ENCODE measurements at regions of chr7 and their contacts with region 1.

Region 1: DNA sequence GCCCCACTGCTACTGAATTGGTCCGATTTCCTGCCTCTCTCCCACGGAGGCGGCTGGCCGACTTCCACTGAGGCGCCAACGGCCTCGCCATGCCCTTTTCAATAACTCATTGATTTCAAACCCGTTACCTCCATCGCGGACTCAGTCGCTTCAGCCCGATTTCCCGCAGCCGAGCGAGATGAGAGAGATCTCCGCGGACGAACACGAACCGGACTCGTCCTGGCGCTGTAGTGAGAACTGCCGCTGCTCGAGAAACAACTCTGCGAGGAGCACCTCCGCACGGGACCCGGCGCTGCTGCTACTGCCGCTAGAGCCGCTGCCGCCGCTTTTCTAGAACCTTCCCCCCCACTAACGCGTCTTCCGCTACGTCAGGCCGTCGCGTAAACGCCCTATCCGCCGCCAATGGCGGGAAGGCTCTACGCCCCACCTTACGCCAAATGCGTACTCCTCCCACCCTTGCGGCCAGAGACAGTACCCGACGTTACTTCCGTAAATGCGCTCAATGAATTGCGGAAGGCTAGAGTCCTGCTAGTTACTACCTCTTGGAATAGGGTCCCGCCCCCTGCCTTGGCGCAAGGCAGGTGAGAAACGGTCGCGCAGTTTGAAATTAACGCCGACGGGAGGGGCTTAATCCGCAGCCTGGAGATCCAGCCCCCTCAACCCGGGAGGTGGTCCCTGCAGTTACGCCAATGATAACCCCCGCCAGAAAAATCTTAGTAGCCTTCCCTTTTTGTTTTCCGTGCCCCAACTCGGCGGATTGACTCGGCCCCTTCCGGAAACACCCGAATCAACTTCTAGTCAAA is at the start of gene HNRNPA2B1:
- DNase-seq: peak; percentile 97 to 98
- H3K4me3 ChIP-seq: peak within 1 kb of the TSS; percentile 98 to 99 (median 98)
- H3K27ac ChIP-seq: peak within 1 kb of the TSS; percentile 99
- H3K4me1 ChIP-seq: peaks cover 0 to 9% (median 3%) of the 10 kb centered on the region in 4 experiments; a peak in 3 of 7 replicates
- H3K27me3 ChIP-seq: no peaks in the 10 kb centered on the region
- CTCF ChIP-seq: no peak
- EP300 ChIP-seq: no peak
- POLR2A ChIP-seq: peak; percentile 98 to 99
- RAD21 ChIP-seq: no peak
- total RNA-seq, gene HNRNPA2B1: 1,232 and 1,255 TPM in 2 replicates

Region 2: GRCh38 chr7:26078437-26079336 is 122.0 kb before region 1 on chr7:
- CTCF ChIA-PET with region 1: interaction called, 4 read pairs
- POLR2A ChIA-PET with region 1: interaction called, 230 read pairs
- DNase-seq: peak; percentile 36 to 87
- H3K4me3 ChIP-seq: peak overlapping the region in 1 of 4 experiments; percentile 3; a peak in 1 of 8 replicates
- H3K27ac ChIP-seq: no peak overlapping the region
- H3K4me1 ChIP-seq: peaks cover 1 to 7% (median 3%) of the 10 kb centered on the region in 4 experiments; a peak in 3 of 7 replicates
- H3K27me3 ChIP-seq: no peaks in the 10 kb centered on the region; a peak in 2 of 7 replicates
- CTCF ChIP-seq: peak; percentile 49 to 64 (median 56)
- EP300 ChIP-seq: no peak
- POLR2A ChIP-seq: no peak
- RAD21 ChIP-seq: peak; percentile 46 to 66; a peak in 3 of 4 replicates

Region 3: DNA sequence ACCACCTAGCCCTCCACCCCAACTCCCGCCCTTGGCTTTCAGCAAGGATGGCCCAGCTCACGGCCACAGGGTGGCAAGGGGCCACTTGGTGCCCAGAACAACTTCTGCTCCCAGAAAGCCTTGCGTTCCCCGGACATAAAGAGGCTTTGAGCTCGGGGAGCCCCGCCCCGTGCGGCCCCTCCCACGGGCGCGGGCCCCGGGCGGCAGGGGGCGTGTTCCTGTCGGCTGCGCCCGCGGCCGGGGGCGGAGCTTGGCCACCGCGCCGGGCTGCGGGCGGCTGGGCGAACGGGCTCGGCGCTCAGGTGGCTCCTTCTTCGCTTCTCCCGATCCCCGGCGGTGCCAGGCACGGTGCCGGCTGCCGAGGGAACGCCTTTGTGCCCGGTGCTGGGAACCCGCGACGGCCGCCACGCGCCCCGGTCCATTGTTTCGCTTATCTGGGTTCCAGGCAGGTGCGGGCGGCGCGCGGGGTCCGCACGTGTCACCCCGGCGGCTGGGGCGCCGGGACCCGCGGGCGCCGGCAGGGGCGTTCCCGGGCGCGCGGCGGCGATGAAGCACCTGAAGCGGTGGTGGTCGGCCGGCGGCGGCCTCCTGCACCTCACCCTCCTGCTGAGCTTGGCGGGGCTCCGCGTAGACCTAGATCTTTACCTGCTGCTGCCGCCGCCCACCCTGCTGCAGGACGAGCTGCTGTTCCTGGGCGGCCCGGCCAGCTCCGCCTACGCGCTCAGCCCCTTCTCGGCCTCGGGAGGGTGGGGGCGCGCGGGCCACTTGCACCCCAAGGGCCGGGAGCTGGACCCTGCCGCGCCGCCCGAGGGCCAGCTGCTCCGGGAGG is 48.5 kb before region 1 on chr7 and contains the start of gene NFE2L3:
- CTCF ChIA-PET with region 1: interaction called, 4 read pairs
- POLR2A ChIA-PET with region 1: interaction called, 40 read pairs
- DNase-seq: peak in 1 of 2 experiments; percentile 87
- H3K4me3 ChIP-seq: peak within 1 kb of the TSS; percentile 65 to 99 (median 95)
- H3K27ac ChIP-seq: peak within 1 kb of the TSS; percentile 91
- H3K4me1 ChIP-seq: peaks cover 17 to 32% (median 22%) of the 10 kb centered on the region in 4 experiments
- H3K27me3 ChIP-seq: peaks cover 0 to 7% (median 0%) of the 10 kb centered on the region in 4 experiments; a peak in 2 of 7 replicates
- CTCF ChIP-seq: peak in 1 of 3 experiments; percentile 18; a peak in 1 of 4 replicates
- EP300 ChIP-seq: peak in 1 of 2 experiments; percentile 4; a peak in 1 of 3 replicates
- POLR2A ChIP-seq: peak; percentile 67 to 77
- RAD21 ChIP-seq: peak in 1 of 2 experiments; percentile 24; a peak in 1 of 4 replicates
- total RNA-seq, gene NFE2L3: 62.6 and 64.9 TPM in 2 replicates

Region 4: GRCh38 chr7:26216049-26216448 is 15.4 kb after region 1 on chr7:
- CTCF ChIA-PET with region 1: interaction called, 4 read pairs
- POLR2A ChIA-PET with region 1: interaction called, 442 read pairs
- DNase-seq: no peak
- H3K4me3 ChIP-seq: no peak overlapping the region
- H3K27ac ChIP-seq: no peak overlapping the region
- H3K4me1 ChIP-seq: no peaks in the 10 kb centered on the region
- H3K27me3 ChIP-seq: no peaks in the 10 kb centered on the region
- CTCF ChIP-seq: no peak
- EP300 ChIP-seq: no peak
- POLR2A ChIP-seq: no peak
- RAD21 ChIP-seq: no peak

Region 5: GRCh38 chr7:26245150-26245549 is 44.5 kb after region 1 on chr7:
- CTCF ChIA-PET with region 1: no interaction called
- POLR2A ChIA-PET with region 1: interaction called, 10 read pairs
- DNase-seq: no peak
- H3K4me3 ChIP-seq: no peak overlapping the region
- H3K27ac ChIP-seq: no peak overlapping the region
- H3K4me1 ChIP-seq: no peaks in the 10 kb centered on the region
- H3K27me3 ChIP-seq: no peaks in the 10 kb centered on the region
- CTCF ChIP-seq: no peak
- EP300 ChIP-seq: no peak
- POLR2A ChIP-seq: no peak
- RAD21 ChIP-seq: no peak

Measured in H1 (cell line).